BJ (cell line): ENCODE measurements at regions of chr10 and their contacts with region 1.

Region 1: GRCh38 chr10:27341001-27341400 is 100.4 kb upstream of the ACBD5 start:
- DNase-seq: no peak
- H3K4me3 ChIP-seq: no peak overlapping the region
- H3K27me3 ChIP-seq: no peaks in the 10 kb centered on the region
- CTCF ChIP-seq: no peak

Region 2: GRCh38 chr10:27373566-27374160 is 32.7 kb after region 1 on chr10:
- CTCF ChIA-PET with region 1: no interaction called
- POLR2A ChIA-PET with region 1: no interaction called
- DNase-seq: no peak
- H3K4me3 ChIP-seq: no peak overlapping the region
- H3K27me3 ChIP-seq: no peaks in the 10 kb centered on the region; the same call in 1 of the 2 replicates
- CTCF ChIP-seq: no peak

Region 3: GRCh38 chr10:27383595-27384542 is 42.9 kb after region 1 on chr10:
- CTCF ChIA-PET with region 1: no interaction called
- POLR2A ChIA-PET with region 1: interaction called, 13 read pairs
- DNase-seq: no peak
- H3K4me3 ChIP-seq: no peak overlapping the region
- H3K27me3 ChIP-seq: no peaks in the 10 kb centered on the region
- CTCF ChIP-seq: no peak

Region 4: DNA sequence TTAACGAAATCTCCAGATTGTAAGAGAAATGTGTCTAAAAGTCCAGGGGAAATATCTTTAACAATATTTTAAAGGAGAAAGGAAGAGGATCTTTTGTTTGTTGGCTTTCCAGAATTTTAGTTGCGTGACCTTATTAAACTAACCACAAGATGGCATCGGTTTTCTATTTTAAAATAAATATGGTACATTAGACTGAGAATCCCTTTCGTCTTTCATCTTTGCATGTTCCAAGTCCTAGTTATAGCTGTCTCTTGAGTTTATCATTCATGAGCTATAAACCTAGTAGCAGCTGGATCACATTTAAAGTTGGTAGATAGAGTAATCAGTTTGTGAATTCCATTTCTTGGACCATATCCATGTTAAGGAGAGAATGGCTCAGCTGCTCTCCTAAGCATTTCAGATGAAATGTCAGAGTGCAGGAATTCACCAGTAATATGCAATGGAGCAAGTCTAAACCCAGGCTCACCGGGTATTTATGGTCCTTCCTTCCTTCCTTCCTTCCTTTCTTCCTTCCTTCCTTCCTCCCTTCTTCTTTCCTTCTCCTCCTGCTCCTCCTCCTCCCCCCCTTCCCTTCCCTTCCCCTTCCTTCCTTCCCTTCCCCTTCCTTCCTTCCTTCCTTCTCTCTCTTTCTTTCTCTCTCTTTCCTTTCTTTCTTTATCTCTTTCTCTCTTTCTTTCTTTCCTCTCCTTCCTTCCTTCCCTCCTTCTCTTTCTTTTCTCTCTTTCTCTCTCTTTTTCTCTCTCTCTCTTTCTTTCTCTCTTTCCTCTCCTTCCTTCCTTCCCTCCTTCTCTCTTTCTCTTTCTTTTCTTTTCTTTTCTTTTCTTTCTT is 105.3 kb after region 1 on chr10:
- CTCF ChIA-PET with region 1: no interaction called
- POLR2A ChIA-PET with region 1: no interaction called
- DNase-seq: peak; percentile 59
- H3K4me3 ChIP-seq: no peak overlapping the region
- H3K27me3 ChIP-seq: no peaks in the 10 kb centered on the region
- CTCF ChIP-seq: peak; percentile 41